ENCODE measurements at regions of chr13 and their contacts with region 1.

Region 1: GRCh38 chr13:27424246-27425157 is at the start of gene GTF3A:
- DNase-seq: peak; percentile 91
- H3K4me3 Mint-ChIP-seq: peak within 1 kb of the TSS; percentile 85
- H3K27ac Mint-ChIP-seq: peak within 1 kb of the TSS; percentile 95
- H3K4me1 Mint-ChIP-seq: peaks cover 35% of the 10 kb centered on the region
- H3K27me3 Mint-ChIP-seq: no peaks in the 10 kb centered on the region
- total RNA-seq, gene GTF3A: 217 to 218 TPM

Region 2: DNA sequence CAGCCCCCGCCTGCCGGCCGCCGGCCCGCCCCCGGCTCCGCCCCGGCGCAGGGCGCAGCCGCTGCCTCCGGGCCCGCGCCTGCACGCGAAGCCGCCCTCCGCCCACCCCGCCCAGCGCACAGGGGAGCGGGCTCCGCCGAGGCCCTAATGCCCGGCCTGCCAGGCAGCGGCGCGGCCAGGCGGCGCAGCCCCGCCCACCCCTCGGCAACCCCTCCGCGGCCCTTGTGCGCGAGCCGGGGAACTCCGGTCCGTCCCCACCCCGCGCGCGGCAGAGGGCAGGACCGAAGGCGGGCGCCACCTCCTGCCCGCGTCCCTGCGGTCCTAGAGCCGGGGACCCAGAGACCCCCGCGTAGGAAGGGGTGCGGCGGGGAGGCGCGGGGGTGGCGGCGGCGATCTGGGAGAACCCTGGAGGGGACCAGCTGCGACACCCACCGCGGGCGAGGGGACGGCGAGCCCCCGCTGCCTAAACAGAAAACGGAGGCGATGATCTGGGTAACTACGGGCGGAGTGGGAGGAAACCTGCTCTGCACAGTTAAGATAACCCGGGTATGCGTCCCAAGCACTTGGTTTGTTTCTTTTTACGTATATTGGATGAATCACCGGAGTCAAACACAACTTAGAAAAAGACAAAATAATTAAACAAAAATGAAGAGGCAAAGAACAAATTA is 252.5 kb before region 1 on chr13:
- CTCF ChIA-PET with region 1: no interaction called
- POLR2A ChIA-PET with region 1: no interaction called
- intact Hi-C with region 1: loop called (anchors 1 kb)
- DNase-seq: peak; percentile 92
- H3K4me3 Mint-ChIP-seq: peak overlapping the region; percentile 75
- H3K27ac Mint-ChIP-seq: peak overlapping the region; percentile 77
- H3K4me1 Mint-ChIP-seq: peaks cover 54% of the 10 kb centered on the region
- H3K27me3 Mint-ChIP-seq: no peaks in the 10 kb centered on the region

Region 3: DNA sequence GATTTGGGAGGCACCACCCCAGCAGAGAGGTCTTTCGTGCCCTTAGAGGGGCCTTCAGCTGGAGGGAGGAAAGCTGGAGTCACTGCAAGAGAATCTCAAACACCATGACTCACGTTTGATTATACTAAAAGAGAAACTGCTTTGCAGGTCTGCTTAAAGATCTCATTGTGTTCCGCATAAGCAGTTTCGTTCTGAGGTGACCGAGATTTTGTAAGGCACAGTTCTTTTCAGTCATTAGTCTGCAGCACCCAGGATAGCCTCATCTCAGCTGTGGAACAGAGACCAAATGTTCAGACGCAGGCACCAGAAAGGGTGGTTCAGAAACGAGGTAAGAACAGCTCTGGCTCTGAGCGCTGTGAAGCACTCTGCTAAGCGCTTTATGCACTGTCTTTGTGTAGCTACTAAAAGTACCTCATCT is 71.3 kb before region 1 on chr13:
- CTCF ChIA-PET with region 1: no interaction called
- POLR2A ChIA-PET with region 1: no interaction called
- intact Hi-C with region 1: loop called (anchors 1 kb)
- DNase-seq: peak; percentile 79
- H3K4me3 Mint-ChIP-seq: peak overlapping the region; percentile 45
- H3K27ac Mint-ChIP-seq: peak overlapping the region; percentile 82
- H3K4me1 Mint-ChIP-seq: peaks cover 19% of the 10 kb centered on the region
- H3K27me3 Mint-ChIP-seq: peaks cover 12% of the 10 kb centered on the region

Region 4: DNA sequence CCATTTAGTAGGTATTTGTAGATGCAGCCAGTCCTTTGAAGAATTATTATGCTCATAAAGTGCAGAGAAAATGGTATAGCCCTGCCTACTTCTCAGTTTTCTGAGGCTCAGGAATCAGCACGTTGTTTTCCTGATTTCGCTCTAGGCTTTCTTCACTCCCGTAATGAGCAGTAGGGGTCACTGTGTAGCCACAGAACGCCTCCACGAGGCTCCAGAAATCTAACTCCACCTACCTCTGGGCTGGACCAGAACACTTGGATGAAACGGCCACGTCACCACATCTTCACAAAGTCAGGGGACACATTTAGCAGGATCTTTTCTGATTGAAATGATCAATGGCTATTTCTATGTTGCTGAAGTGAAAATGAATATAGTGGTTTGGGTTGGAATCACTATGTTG is 49.9 kb before region 1 on chr13:
- CTCF ChIA-PET with region 1: interaction called, 5 read pairs
- POLR2A ChIA-PET with region 1: no interaction called
- intact Hi-C with region 1: loop called (anchors 2 kb)
- DNase-seq: peak; percentile 70
- H3K4me3 Mint-ChIP-seq: no peak overlapping the region
- H3K27ac Mint-ChIP-seq: no peak overlapping the region
- H3K4me1 Mint-ChIP-seq: peaks cover 5% of the 10 kb centered on the region
- H3K27me3 Mint-ChIP-seq: peaks cover 20% of the 10 kb centered on the region

Region 5: DNA sequence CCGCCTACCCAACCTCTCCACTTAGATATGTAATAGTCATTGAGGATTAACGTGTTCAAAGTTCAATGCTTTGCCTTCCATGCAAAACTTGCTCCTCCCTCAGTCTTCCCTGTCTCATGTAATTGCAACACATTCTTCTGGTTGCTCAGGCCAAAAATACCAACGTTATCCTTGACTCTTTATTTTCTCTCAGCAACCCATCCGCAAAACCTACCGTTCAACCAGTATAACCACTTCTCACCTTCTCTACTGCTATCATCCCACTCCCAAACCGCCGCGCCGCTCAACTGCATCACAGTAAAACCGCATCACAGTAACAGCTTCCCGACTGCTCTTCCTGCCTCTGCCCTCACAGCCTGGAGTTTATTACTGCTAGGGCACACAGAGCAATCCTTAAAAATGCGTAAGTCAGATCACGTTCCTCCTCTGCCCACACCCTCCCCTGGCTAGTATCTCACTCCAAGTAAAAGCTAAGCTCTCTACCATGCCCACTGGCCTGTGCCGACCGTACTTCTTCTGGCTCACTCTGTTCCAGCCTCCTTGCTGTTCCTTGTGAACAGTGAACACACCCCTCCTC is 17.7 kb after region 1 on chr13:
- CTCF ChIA-PET with region 1: interaction called, 43 read pairs
- POLR2A ChIA-PET with region 1: interaction called, 44 read pairs
- intact Hi-C with region 1: no loop called
- DNase-seq: peak; percentile 59
- H3K4me3 Mint-ChIP-seq: peak overlapping the region; percentile 35
- H3K27ac Mint-ChIP-seq: peak overlapping the region; percentile 60
- H3K4me1 Mint-ChIP-seq: peaks cover 56% of the 10 kb centered on the region
- H3K27me3 Mint-ChIP-seq: no peaks in the 10 kb centered on the region

Region 6: GRCh38 chr13:27455331-27455855 is 30.9 kb after region 1 on chr13:
- CTCF ChIA-PET with region 1: interaction called, 43 read pairs
- POLR2A ChIA-PET with region 1: interaction called, 72 read pairs
- intact Hi-C with region 1: loop called (anchors 1 kb)
- DNase-seq: peak; percentile 32
- H3K4me3 Mint-ChIP-seq: peak overlapping the region; percentile 88
- H3K27ac Mint-ChIP-seq: peak overlapping the region; percentile 97
- H3K4me1 Mint-ChIP-seq: peaks cover 34% of the 10 kb centered on the region
- H3K27me3 Mint-ChIP-seq: no peaks in the 10 kb centered on the region

Region 7: GRCh38 chr13:27613628-27614027 is 189.1 kb after region 1 on chr13:
- CTCF ChIA-PET with region 1: no interaction called
- POLR2A ChIA-PET with region 1: no interaction called
- intact Hi-C with region 1: no loop called
- DNase-seq: no peak
- H3K4me3 Mint-ChIP-seq: no peak overlapping the region
- H3K27ac Mint-ChIP-seq: no peak overlapping the region
- H3K4me1 Mint-ChIP-seq: peaks cover 32% of the 10 kb centered on the region
- H3K27me3 Mint-ChIP-seq: no peaks in the 10 kb centered on the region

Region 8: DNA sequence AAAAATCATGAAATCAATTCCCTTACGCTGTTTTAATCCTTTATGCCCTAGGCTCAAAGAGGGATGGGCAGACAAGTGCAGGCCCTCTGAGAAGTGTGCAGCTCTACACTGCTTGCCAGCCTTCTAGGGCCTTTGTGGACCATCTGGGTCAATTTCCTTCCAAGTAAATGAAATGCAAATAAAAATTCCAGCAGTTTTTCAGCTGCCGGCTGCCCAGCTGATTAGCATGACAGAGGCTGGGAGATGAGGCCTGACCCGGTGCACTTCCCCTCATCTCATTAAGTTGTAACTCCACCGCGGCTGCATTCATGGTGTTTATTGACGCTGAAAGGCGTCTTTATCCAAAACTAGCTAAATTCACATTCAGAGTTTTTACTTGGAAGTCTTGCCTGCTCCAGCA is 320.3 kb after region 1 on chr13:
- CTCF ChIA-PET with region 1: no interaction called
- POLR2A ChIA-PET with region 1: no interaction called
- intact Hi-C with region 1: no loop called
- DNase-seq: no peak
- H3K4me3 Mint-ChIP-seq: no peak overlapping the region
- H3K27ac Mint-ChIP-seq: no peak overlapping the region
- H3K4me1 Mint-ChIP-seq: no peaks in the 10 kb centered on the region
- H3K27me3 Mint-ChIP-seq: peaks cover 6% of the 10 kb centered on the region

Region 9: DNA sequence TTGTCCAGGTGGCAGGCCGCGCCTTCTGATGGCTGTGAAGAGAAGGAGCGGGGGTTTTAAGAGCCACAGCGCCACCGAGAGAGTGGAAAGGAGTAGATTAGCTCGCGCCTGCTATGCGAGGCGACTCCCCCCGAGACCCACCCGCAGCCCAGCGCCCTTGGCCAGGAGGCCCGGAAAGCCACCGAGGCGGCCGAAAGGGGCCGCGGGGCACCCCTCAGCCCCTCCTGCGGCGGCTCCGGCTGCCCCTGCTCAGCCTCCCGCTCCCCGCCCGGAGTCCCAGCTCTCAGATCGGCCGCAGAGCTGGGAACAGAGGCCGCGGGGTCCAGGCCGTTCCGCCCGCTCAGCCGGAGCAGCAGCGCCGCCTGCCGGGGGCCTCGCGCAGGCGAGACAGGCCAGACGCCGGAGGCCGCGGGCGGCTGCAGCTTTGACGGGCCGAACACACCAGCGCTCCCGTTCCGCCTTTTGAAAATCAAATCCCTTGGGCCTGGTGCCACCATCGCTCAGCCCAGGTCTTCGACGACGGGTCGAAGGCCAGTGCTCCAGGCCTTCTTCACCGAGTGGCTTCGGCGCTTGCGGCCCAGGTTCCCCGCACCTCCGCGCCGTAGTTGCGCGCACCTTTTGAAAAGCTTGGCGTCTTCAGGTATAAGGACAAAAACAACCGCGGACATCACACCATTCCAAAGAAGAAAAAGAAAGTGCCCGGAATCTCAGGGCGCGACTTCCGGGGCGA is 529.3 kb after region 1 on chr13:
- CTCF ChIA-PET with region 1: no interaction called
- POLR2A ChIA-PET with region 1: no interaction called
- intact Hi-C with region 1: no loop called
- DNase-seq: peak; percentile 75
- H3K4me3 Mint-ChIP-seq: peak overlapping the region; percentile 58
- H3K27ac Mint-ChIP-seq: no peak overlapping the region
- H3K4me1 Mint-ChIP-seq: peaks cover 10% of the 10 kb centered on the region
- H3K27me3 Mint-ChIP-seq: peaks cover 57% of the 10 kb centered on the region

Measured in activated CD4-positive, alpha-beta memory T cell treated with anti-CD3 and anti-CD28 coated beads for 36 hours (primary cell).